ENCODE measurements at regions of chr10 and their contacts with region 1.

Region 1: DNA sequence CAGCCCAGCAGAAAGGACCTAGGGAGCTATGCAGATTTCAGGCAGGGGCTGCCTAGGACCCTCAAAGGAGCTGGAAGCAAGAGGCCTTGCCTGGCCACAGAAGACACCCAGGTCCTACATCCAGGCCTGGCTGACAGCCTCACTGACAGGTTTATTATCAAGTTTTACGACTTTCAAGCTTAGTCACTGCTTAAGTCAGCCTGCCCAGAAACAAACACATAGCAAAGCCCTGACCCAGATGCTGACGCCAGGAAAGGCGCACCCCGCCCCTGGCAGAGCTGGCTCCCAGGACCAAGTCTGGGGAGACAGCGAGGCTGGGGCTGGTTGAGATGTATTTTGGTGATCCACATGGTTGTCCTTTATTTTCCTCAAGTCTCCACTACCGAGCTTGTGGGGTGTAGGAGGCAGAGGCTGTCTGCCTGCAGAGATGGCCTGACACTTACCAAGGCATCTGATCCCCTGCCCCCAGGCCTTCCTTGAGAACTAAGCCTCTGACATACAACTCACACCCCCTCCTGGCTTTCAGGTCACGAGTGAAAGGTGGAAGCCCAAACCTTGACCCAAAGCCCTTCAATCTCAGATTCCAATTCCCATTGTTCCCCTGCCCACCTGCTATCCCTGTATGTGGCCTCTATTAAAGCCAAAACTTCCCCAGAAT is 80.7 kb upstream of the EMX2 start:
- DNase-seq: no peak
- ATAC-seq: no peak
- H3K4me3 ChIP-seq: no peak overlapping the region
- H3K27ac ChIP-seq: no peak overlapping the region
- H3K4me1 ChIP-seq: no peaks in the 10 kb centered on the region
- H3K27me3 ChIP-seq: no peaks in the 10 kb centered on the region
- CTCF ChIP-seq: no peak

Region 2: GRCh38 chr10:117226824-117227451 is 235.0 kb before region 1 on chr10:
- intact Hi-C with region 1: loop called (anchors 10 kb)
- DNase-seq: no peak
- ATAC-seq: peak; percentile 71
- H3K4me3 ChIP-seq: no peak overlapping the region
- H3K27ac ChIP-seq: no peak overlapping the region
- H3K4me1 ChIP-seq: no peaks in the 10 kb centered on the region
- H3K27me3 ChIP-seq: peaks cover 8% of the 10 kb centered on the region
- CTCF ChIP-seq: peak; percentile 40

Region 3: DNA sequence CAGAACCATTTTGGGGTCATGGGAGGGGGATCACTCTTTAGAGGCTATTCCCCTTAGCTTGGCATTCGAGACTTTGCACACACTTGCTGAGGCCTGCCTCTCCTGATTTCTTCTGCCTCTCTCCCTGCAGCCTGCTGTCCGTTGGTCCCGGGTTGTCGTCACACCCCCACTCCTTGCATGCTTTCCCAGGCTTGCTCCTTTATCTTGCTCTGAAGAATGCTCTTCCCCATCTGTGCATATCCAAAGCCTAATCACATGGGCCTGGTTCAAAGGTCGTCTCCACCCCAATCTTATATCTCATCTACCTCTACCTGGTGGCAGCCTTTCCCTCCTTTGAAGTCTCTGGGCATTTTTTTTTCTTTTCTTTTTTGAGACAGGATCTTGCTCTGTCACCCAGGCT is 56.4 kb after region 1 on chr10:
- intact Hi-C with region 1: no loop called
- DNase-seq: no peak
- ATAC-seq: no peak
- H3K4me3 ChIP-seq: no peak overlapping the region
- H3K27ac ChIP-seq: no peak overlapping the region
- H3K4me1 ChIP-seq: no peaks in the 10 kb centered on the region
- H3K27me3 ChIP-seq: peaks cover 42% of the 10 kb centered on the region
- CTCF ChIP-seq: no peak

Measured in upper lobe of right lung (tissue), 1 donor.